Activated B cell treated with CpG ODN at 0.5 μM for 24 hours (primary cell): ENCODE measurements at regions of chr5 and their contacts with region 1.

Region 1: DNA sequence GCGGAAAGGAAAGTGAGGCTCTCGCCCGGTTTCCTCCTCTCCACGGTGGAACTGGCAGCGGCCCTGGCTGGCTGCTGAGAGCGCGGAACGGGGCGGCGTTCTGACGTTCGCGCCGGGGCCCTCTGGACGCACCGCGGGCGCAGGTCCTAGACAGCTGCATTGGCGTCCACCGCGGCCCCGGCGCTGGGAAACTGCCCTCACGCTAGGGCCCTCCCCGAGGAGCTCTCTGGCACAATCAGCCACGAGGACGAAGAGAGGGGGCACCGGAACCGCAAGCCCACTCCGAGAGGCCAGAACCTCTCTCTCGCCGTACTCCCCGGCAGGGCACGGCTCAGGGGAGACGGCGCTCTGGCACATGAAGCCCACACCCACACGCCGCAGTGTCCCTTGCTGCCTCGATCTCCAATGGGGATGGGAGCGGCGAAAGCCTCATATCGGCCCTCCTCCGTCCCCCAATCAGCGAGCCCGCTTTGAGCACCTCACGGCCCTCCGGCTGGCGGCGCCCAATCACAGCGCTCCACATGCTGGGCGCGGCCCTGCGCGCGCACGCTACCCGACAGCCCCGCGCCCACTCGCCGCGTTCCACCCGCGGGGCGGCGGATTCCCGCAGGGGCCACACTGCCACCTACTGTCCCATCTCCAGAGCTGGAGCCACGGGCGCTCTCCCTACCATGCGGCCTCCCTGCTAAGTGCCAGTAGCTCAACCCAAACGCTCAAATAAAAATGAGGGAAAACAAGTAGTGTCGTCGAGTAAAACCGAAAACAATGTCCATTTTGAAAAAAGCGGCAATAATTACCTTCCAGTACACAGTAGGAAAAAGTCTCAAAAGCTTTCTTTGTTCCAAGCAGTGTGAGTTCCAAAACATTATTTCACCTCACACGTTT is 11.8 kb downstream of the MRPS27 start:
- DNase-seq: peak; percentile 95
- ATAC-seq: peak; percentile 95
- H3K4me3 Mint-ChIP-seq: peak overlapping the region; percentile 92
- H3K27ac Mint-ChIP-seq: peak overlapping the region; percentile 97
- H3K4me1 Mint-ChIP-seq: peaks cover 46% of the 10 kb centered on the region
- H3K27me3 Mint-ChIP-seq: no peaks in the 10 kb centered on the region
- CTCF ChIP-seq: peak; percentile 24

Region 2: GRCh38 chr5:71586941-71587765 is 721.1 kb before region 1 on chr5 and contains the start of gene MCCC2:
- CTCF ChIA-PET with region 1: no interaction called
- POLR2A ChIA-PET with region 1: no interaction called
- intact Hi-C with region 1: loop called (anchors 2 kb)
- DNase-seq: peak; percentile 93
- ATAC-seq: peak; percentile 98
- H3K4me3 Mint-ChIP-seq: peak within 1 kb of the TSS; percentile 97
- H3K27ac Mint-ChIP-seq: peak within 1 kb of the TSS; percentile 99
- H3K4me1 Mint-ChIP-seq: peaks cover 43% of the 10 kb centered on the region
- H3K27me3 Mint-ChIP-seq: no peaks in the 10 kb centered on the region
- CTCF ChIP-seq: no peak
- total RNA-seq, gene MCCC2: 68.5 and 70.4 TPM in 2 replicates

Region 3: DNA sequence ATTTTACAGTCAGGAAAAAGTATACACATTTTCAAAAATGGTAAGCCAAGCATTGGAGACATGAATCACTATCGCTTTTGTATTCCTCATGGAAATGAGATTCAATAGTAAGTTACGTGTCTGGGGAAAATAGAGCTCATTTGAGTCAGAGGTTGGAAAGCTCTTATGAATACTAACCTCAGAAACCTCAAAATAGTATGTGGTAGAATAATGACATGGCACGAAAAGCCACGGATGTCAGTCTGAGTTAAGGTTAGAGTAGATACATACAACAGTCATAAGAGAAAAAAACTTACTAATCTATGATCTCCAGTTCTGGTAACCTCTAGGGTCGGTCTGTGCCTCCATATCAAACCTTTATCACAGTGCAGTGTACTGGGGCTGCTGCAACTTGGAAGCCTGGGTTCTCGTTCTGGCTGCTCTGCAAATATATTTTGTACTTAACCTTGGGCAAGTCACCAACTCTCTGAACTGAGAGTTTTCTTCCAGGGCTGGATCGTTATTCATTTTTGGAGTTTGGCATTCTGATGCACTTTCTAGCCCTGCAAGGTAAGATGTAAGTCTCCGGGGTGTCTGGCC is 169.2 kb before region 1 on chr5:
- CTCF ChIA-PET with region 1: interaction called, 12 read pairs
- POLR2A ChIA-PET with region 1: interaction called, 6 read pairs
- intact Hi-C with region 1: loop called (anchors 1 kb)
- DNase-seq: no peak
- ATAC-seq: no peak
- H3K4me3 Mint-ChIP-seq: no peak overlapping the region
- H3K27ac Mint-ChIP-seq: no peak overlapping the region
- H3K4me1 Mint-ChIP-seq: no peaks in the 10 kb centered on the region
- H3K27me3 Mint-ChIP-seq: peaks cover 13% of the 10 kb centered on the region
- CTCF ChIP-seq: no peak

Region 4: GRCh38 chr5:72268753-72269410 is 39.3 kb before region 1 on chr5:
- CTCF ChIA-PET with region 1: interaction called, 3 read pairs
- POLR2A ChIA-PET with region 1: no interaction called
- intact Hi-C with region 1: loop called (anchors 1 kb)
- DNase-seq: no peak
- ATAC-seq: peak; percentile 45
- H3K4me3 Mint-ChIP-seq: no peak overlapping the region
- H3K27ac Mint-ChIP-seq: no peak overlapping the region
- H3K4me1 Mint-ChIP-seq: peaks cover 5% of the 10 kb centered on the region
- H3K27me3 Mint-ChIP-seq: no peaks in the 10 kb centered on the region
- CTCF ChIP-seq: no peak

Region 5: DNA sequence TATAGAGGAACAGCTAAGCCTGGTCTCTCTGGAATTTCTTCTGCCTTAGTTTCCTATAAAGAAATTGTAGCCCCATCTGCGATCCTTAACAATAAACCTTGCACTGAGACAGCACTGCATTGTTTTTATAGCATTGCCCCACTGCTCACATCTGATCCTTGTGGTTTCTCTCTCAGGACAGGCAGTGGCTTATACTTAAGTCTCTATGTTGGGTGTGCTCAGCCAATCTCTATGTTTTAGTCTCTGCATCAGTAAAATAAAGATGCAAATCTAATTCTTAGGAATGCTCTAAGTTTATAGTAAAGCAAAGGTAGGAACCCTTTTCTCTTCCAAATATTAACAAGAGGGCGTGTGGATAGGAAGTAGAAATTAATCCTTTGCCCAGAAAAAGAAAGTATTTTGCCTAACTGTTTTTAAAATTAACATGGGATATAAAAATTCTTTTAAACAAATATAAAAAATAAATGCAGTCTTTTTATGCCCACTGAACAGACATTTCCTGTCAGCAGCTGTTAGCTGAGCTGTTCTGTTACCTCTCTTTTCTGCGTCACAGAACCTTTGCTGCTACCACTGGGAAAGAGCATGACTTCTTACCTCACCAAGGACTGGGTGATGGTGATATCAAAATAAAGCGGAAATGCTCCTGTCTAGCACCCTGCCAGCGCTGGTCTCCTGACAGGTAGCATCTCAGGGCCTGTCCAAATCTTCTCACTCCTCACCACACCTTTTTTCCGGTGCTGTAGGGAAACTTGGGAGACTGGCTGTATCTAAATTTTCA is 17.7 kb before region 1 on chr5:
- CTCF ChIA-PET with region 1: interaction called, 7 read pairs
- POLR2A ChIA-PET with region 1: interaction called, 14 read pairs
- intact Hi-C with region 1: loop called (anchors 1 kb)
- DNase-seq: no peak
- ATAC-seq: peak; percentile 72
- H3K4me3 Mint-ChIP-seq: no peak overlapping the region
- H3K27ac Mint-ChIP-seq: peak overlapping the region; percentile 70
- H3K4me1 Mint-ChIP-seq: peaks cover 58% of the 10 kb centered on the region
- H3K27me3 Mint-ChIP-seq: no peaks in the 10 kb centered on the region
- CTCF ChIP-seq: no peak

Region 6: DNA sequence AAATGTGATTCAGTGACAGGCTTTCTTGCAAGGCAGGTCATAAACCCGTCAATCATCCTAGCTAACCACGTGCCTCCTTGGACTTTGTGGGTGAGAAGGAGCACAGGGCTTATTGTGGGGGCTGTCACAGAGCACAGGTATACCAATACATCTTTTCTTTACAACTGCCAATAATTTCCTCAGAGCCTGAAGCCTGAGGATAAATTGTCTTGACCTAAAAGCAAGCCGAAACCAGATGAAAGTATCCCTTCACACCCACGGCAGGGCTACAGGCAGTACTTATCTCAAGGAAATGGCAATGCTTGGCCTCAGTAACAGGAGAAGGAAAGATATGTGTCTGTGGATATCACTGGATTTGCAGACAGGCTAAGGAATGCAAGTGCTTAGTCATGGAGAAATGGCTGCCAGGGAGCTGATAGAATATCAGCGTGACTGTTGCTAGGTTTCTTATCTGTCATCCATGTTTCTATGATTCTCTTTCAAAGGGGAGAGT is 289.3 kb after region 1 on chr5:
- CTCF ChIA-PET with region 1: no interaction called
- POLR2A ChIA-PET with region 1: no interaction called
- intact Hi-C with region 1: no loop called
- DNase-seq: no peak
- ATAC-seq: no peak
- H3K4me3 Mint-ChIP-seq: no peak overlapping the region
- H3K27ac Mint-ChIP-seq: no peak overlapping the region
- H3K4me1 Mint-ChIP-seq: peaks cover 18% of the 10 kb centered on the region
- H3K27me3 Mint-ChIP-seq: no peaks in the 10 kb centered on the region
- CTCF ChIP-seq: no peak

Region 7: DNA sequence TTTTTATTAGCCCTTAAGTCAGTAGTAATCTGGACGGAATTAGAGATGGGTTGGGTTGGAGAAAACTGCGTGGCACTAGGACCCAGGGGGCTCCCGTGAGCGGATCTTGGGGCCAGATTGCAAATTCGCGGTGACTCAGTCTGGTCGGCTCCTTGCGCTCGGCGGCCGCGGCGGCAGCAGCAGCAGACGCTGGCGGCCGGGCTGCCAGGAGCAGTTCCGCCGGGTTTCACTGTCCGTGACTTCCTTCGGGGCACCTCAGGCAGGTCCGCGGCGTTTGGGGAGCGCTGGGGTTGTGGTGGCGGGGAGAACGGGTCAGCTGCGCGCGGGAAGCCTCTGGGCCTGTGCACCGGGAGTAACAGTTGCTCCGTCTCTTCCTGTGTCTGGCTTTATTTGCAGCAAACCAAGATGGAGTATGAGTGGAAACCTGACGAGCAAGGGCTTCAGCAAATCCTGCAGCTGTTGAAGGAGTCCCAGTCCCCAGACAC is 539.8 kb after region 1 on chr5:
- CTCF ChIA-PET with region 1: no interaction called
- POLR2A ChIA-PET with region 1: interaction called, 4 read pairs
- intact Hi-C with region 1: loop called (anchors 5 kb)
- DNase-seq: peak; percentile 82
- ATAC-seq: peak; percentile 73
- H3K4me3 Mint-ChIP-seq: peak overlapping the region; percentile 96
- H3K27ac Mint-ChIP-seq: peak overlapping the region; percentile 96
- H3K4me1 Mint-ChIP-seq: peaks cover 56% of the 10 kb centered on the region
- H3K27me3 Mint-ChIP-seq: no peaks in the 10 kb centered on the region
- CTCF ChIP-seq: no peak

Region 8: GRCh38 chr5:73582285-73583145 is 1274.3 kb after region 1 on chr5:
- CTCF ChIA-PET with region 1: no interaction called
- POLR2A ChIA-PET with region 1: no interaction called
- intact Hi-C with region 1: no loop called
- DNase-seq: no peak
- ATAC-seq: no peak
- H3K4me3 Mint-ChIP-seq: no peak overlapping the region
- H3K27ac Mint-ChIP-seq: no peak overlapping the region
- H3K4me1 Mint-ChIP-seq: no peaks in the 10 kb centered on the region
- H3K27me3 Mint-ChIP-seq: no peaks in the 10 kb centered on the region
- CTCF ChIP-seq: no peak